ENCODE measurements at regions of chr3 and their contacts with region 1.

Region 1: GRCh38 chr3:192957441-192958021 is 39.9 kb upstream of the MB21D2 start:
- DNase-seq: peak; percentile 67
- H3K4me3 Mint-ChIP-seq: peak overlapping the region; percentile 24
- H3K27ac Mint-ChIP-seq: peak overlapping the region; percentile 78
- H3K4me1 Mint-ChIP-seq: peaks cover 24% of the 10 kb centered on the region
- H3K27me3 Mint-ChIP-seq: no peaks in the 10 kb centered on the region

Region 2: GRCh38 chr3:192887047-192887446 is 70.5 kb before region 1 on chr3:
- intact Hi-C with region 1: loop called (anchors 1 kb)
- DNase-seq: peak; percentile 64
- H3K4me3 Mint-ChIP-seq: peak overlapping the region; percentile 39
- H3K27ac Mint-ChIP-seq: peak overlapping the region; percentile 85
- H3K4me1 Mint-ChIP-seq: peaks cover 57% of the 10 kb centered on the region
- H3K27me3 Mint-ChIP-seq: peaks cover 3% of the 10 kb centered on the region

Region 3: GRCh38 chr3:192899540-192899982 is 58.0 kb before region 1 on chr3:
- intact Hi-C with region 1: loop called (anchors 2 kb)
- DNase-seq: no peak
- H3K4me3 Mint-ChIP-seq: peak overlapping the region; percentile 65
- H3K27ac Mint-ChIP-seq: peak overlapping the region; percentile 85
- H3K4me1 Mint-ChIP-seq: peaks cover 62% of the 10 kb centered on the region
- H3K27me3 Mint-ChIP-seq: peaks cover 20% of the 10 kb centered on the region

Region 4: GRCh38 chr3:192993411-192993810 is 35.9 kb after region 1 on chr3:
- intact Hi-C with region 1: no loop called
- DNase-seq: no peak
- H3K4me3 Mint-ChIP-seq: no peak overlapping the region
- H3K27ac Mint-ChIP-seq: no peak overlapping the region
- H3K4me1 Mint-ChIP-seq: peaks cover 8% of the 10 kb centered on the region
- H3K27me3 Mint-ChIP-seq: peaks cover 16% of the 10 kb centered on the region

Measured in activated CD4-positive, alpha-beta T cell treated with anti-CD3 and anti-CD28 coated beads, Interleukin-2, amount 10 ng/mL, durations not matched to agents 24 days and 14 days (primary cell).